Activated CD8-positive, alpha-beta T cell treated with anti-CD3 and anti-CD28 coated beads, Interleukin-2, amount 10 ng/mL, durations not matched to agents 7 days and 5 days (primary cell): ENCODE measurements at regions of chr7 and their contacts with region 1.

Region 1: DNA sequence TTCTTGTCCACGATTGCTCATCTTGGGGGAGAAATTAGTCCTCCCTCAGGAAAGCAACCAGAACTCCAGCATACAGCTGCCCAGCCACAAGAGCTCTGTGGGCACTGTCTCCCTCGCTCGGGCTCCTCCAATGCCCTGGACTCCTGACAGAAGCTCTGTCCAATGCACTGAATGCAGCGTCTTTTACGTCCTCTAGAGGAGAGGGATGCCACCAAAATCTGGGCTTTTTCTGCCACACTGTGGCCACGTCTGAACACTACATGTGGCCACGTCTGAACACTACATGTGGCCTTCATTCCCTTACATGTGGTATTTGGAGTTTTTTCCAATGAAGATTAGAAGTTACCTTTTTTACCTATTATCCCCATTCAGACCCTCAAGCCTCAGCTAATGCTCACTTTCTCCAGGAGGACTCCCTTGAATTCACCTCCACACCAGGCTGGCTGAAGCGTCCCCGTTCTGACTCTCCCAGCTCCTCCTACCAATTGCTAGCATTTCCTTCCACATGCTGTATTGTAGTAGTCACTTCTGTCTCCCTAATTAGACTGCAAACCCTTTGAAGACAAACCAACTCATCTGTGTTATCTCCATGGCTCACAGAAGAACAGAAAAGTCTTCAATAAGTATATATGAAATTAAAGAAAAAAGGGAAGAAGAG is 134.3 kb upstream of the PDE1C start:
- DNase-seq: no peak
- ATAC-seq: no peak
- H3K4me3 Mint-ChIP-seq: no peak overlapping the region
- H3K27ac Mint-ChIP-seq: no peak overlapping the region
- H3K4me1 Mint-ChIP-seq: no peaks in the 10 kb centered on the region
- H3K27me3 Mint-ChIP-seq: no peaks in the 10 kb centered on the region

Region 2: DNA sequence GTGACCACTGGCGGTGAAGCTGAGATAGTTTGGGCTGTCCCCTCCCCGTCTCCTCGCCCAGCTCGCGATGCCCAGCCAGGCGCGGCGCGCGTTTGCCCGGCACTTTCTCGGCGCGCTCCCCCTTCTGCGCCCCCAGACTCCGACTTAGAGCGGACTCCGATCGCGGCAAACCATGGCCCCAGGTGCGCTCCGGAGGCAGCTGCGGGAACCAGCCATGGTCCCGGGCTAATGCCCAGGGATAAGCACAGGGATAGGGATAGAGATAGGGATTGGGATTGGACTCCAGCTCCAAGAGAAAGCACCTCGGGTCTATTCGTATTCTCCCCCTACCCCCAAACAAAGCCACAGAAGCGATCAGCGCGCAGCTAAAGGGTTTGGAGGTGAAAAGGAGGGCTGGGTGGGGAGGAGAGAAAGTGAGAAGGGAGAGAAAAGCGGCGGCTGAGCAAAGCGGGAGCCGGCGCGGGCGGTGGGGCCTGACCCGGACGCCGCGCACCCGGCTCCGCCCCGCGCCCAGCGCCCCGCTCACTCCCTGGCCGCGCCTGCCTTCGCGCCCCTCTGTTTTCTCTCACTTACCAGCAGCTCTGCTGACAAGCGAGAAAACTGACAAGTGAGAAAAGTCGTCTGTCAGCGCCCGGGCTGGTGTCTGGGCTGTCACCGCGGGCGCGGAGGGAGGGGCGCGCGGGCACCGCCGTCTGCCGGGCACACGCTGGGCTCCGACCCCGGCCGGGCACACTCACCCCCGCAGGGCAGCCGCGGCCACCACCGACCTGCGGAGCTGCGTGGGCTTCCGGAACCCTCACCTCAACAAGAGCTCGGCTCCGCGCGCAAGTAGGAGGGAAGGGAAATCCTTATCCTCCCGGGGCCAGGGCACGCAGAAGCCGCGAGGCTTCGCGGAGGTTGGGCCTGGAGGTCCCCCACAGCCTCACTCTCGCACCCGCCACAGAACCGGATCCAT is 133.8 kb before region 1 on chr7 and contains the start of gene PDE1C:
- CTCF ChIA-PET with region 1: no interaction called
- POLR2A ChIA-PET with region 1: no interaction called
- DNase-seq: no peak
- ATAC-seq: no peak
- H3K4me3 Mint-ChIP-seq: no peak within 1 kb of the TSS
- H3K27ac Mint-ChIP-seq: no peak within 1 kb of the TSS
- H3K4me1 Mint-ChIP-seq: no peaks in the 10 kb centered on the region
- H3K27me3 Mint-ChIP-seq: peaks cover 16% of the 10 kb centered on the region
- total RNA-seq, gene PDE1C: not detected

Region 3: GRCh38 chr7:32221736-32222135 is 17.2 kb after region 1 on chr7:
- CTCF ChIA-PET with region 1: no interaction called
- POLR2A ChIA-PET with region 1: no interaction called
- DNase-seq: no peak
- ATAC-seq: no peak
- H3K4me3 Mint-ChIP-seq: no peak overlapping the region
- H3K27ac Mint-ChIP-seq: no peak overlapping the region
- H3K4me1 Mint-ChIP-seq: no peaks in the 10 kb centered on the region
- H3K27me3 Mint-ChIP-seq: peaks cover 2% of the 10 kb centered on the region

Region 4: DNA sequence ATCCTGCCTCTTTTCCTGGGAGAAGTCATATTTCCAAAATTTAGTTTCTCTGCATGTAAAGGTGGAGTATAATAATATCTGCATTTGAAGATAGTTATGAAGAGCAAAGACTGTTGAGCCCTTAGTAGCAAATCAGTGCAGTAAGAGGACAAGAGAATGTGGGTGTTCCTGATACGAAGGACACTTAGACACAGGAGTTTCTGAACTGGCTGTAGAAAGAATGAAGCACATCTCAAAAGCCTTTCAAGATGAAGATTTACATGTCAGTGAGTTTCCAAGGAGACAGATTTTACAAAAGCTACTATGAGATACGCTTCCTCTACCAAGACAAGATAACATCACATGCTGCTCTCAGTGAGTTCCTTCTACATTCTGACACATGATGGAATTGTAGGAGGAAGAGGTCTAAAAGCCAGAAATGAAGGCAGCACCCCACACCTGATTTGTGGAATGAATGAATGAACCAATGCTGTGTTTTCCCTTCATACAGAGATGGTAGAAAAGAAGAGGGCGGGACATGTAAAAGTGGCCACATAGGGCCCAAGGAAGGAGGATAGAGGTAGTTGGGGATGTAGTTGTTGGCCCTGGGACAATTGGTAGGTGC is 39.3 kb after region 1 on chr7:
- CTCF ChIA-PET with region 1: no interaction called
- POLR2A ChIA-PET with region 1: no interaction called
- DNase-seq: no peak
- ATAC-seq: no peak
- H3K4me3 Mint-ChIP-seq: no peak overlapping the region
- H3K27ac Mint-ChIP-seq: no peak overlapping the region
- H3K4me1 Mint-ChIP-seq: no peaks in the 10 kb centered on the region
- H3K27me3 Mint-ChIP-seq: peaks cover 3% of the 10 kb centered on the region

Region 5: DNA sequence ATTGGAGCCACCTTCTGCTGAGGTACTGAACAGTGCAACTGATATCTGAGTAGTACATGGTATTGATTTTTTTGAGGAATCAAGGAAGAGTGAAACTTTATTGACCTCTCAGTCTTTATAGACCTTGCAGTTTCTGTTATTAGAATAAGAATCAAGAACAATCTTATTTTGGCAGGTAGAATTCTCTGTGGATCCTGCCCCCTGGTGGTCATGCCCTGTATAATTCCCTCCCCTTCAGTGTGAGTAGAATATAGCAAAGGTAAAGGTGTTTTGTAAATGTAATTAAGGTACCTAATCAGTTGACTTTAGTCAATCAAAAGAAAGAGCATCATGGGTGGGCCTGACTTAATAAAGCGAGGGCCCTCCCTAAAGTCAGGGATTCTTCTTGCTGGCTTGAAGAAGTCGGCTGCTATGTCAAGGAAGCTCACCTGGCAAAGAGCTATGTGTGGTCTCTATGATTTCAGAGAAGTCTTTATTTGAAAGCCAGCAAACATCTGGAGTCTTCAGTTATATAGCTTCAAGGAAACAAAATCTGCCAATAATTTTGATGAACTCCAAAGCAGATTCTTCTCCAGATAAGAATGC is 142.8 kb after region 1 on chr7:
- CTCF ChIA-PET with region 1: interaction called, 21 read pairs
- POLR2A ChIA-PET with region 1: no interaction called
- DNase-seq: peak; percentile 51
- ATAC-seq: no peak
- H3K4me3 Mint-ChIP-seq: no peak overlapping the region
- H3K27ac Mint-ChIP-seq: no peak overlapping the region
- H3K4me1 Mint-ChIP-seq: no peaks in the 10 kb centered on the region
- H3K27me3 Mint-ChIP-seq: peaks cover 8% of the 10 kb centered on the region

Region 6: GRCh38 chr7:32393861-32394260 is 189.4 kb after region 1 on chr7:
- CTCF ChIA-PET with region 1: no interaction called
- POLR2A ChIA-PET with region 1: no interaction called
- DNase-seq: no peak
- ATAC-seq: no peak
- H3K4me3 Mint-ChIP-seq: no peak overlapping the region
- H3K27ac Mint-ChIP-seq: no peak overlapping the region
- H3K4me1 Mint-ChIP-seq: no peaks in the 10 kb centered on the region
- H3K27me3 Mint-ChIP-seq: peaks cover 4% of the 10 kb centered on the region